MCF 10A (cell line): ENCODE measurements at regions of chr7 and their contacts with region 1.

Region 1: GRCh38 chr7:99465421-99465768 is 572 bp downstream of the ATP5MF start:
- DNase-seq: peak; percentile 14
- H3K4me3 Mint-ChIP-seq: peak overlapping the region; percentile 89
- H3K27ac Mint-ChIP-seq: peak overlapping the region; percentile 98
- H3K4me1 Mint-ChIP-seq: peaks cover 15% of the 10 kb centered on the region
- H3K27me3 Mint-ChIP-seq: no peaks in the 10 kb centered on the region
- CTCF ChIP-seq: no peak

Region 2: DNA sequence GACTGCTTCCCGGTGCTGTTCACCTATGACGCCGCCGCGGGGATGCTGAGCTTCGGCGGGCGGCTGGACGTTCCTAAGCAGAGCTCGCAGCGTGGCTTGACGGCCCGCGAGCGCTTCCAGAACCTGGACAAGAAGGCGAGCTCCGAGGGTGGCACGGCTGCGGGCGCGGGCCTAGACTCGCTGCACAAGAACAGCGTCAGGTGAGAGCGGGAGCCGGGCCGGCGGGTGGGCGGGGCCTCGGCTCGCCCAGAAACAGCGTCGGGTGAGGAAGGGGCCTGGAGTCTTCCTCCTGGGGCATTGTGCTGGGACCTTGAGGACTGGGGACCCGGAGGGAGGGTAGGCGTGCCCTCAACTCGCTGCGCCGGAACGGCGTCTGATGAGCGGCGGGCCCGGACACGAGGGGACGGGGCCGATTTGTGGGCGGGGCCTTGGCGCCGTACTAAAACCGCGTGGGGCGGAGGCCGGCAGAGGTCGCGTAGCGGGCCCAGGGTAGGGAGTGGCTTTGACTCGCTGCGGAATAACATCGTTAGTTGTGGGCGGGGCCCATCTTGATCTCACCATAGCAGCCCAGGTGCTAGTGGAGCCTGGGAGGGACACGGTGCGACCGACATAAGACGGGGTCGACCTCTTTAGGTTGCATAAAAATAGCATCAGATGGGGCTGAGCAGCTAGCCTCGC is 72.6 kb before region 1 on chr7:
- CTCF ChIA-PET with region 1: no interaction called
- POLR2A ChIA-PET with region 1: no interaction called
- intact Hi-C with region 1: no loop called
- DNase-seq: no peak
- H3K4me3 Mint-ChIP-seq: no peak overlapping the region
- H3K27ac Mint-ChIP-seq: no peak overlapping the region
- H3K4me1 Mint-ChIP-seq: no peaks in the 10 kb centered on the region
- H3K27me3 Mint-ChIP-seq: no peaks in the 10 kb centered on the region
- CTCF ChIP-seq: no peak

Region 3: DNA sequence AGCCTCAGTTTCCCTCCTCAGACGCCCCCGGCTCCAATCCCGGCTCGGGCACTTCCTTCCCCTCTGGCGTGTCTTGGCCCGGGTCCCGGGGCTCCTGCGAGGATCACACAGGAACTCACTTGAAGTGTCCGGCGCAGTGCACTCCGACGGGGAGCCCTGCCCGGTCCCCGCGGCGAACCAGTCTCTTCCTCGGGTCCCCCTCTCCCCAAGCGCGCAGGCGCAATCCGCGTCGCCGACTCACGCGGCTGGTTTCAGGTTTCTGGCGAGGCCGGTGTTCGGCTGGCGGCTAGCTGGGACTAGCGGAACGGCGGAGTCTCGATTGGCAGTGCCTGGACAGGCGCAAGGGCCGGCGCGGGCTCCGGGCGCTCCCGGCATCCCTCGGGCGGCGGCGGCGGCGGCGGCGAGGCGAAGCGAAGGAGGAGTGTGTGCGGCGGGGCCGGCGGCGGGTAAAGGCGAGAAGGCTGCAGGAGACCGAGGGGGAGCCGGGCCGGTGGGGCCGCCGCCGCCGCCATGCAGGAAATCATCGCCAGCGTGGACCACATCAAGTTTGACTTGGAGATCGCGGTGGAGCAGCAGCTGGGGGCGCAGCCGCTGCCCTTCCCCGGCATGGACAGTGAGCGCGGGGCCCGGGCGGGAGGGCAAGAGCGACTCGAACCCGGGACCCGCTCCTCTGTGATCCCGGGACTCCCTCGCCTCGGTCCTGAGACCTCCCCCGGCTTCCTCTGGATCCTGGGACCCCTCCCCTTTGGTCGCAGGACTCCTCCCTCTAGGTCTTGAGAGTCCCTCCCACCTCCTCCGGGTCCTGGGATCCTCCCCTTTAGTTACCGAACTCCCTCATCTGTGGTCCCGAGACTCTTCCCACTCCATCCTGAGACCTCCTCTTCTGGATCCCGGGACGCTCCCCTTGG is 26.6 kb before region 1 on chr7 and contains the starts of genes CPSF4 and PTCD1:
- CTCF ChIA-PET with region 1: interaction called, 4 read pairs
- POLR2A ChIA-PET with region 1: interaction called, 17 read pairs
- intact Hi-C with region 1: no loop called
- DNase-seq: peak; percentile 96
- H3K4me3 Mint-ChIP-seq: peak within 1 kb of the TSS; percentile 94
- H3K27ac Mint-ChIP-seq: peak within 1 kb of the TSS; percentile 97
- H3K4me1 Mint-ChIP-seq: peaks cover 5% of the 10 kb centered on the region
- H3K27me3 Mint-ChIP-seq: no peaks in the 10 kb centered on the region
- CTCF ChIP-seq: no peak
- total RNA-seq, gene CPSF4: 49.5 and 62.6 TPM in 2 replicates
- total RNA-seq, gene PTCD1: 4.9 and 8.6 TPM in 2 replicates

Region 4: GRCh38 chr7:99521399-99521798 is 56.0 kb after region 1 on chr7:
- CTCF ChIA-PET with region 1: no interaction called
- POLR2A ChIA-PET with region 1: no interaction called
- intact Hi-C with region 1: no loop called
- DNase-seq: no peak
- H3K4me3 Mint-ChIP-seq: no peak overlapping the region
- H3K27ac Mint-ChIP-seq: no peak overlapping the region
- H3K4me1 Mint-ChIP-seq: no peaks in the 10 kb centered on the region
- H3K27me3 Mint-ChIP-seq: no peaks in the 10 kb centered on the region
- CTCF ChIP-seq: no peak